Activated CD8-positive, alpha-beta T cell treated with anti-CD3 and anti-CD28 coated beads for 36 hours (primary cell): ENCODE measurements at regions of chr19 and their contacts with region 1.

Region 1: DNA sequence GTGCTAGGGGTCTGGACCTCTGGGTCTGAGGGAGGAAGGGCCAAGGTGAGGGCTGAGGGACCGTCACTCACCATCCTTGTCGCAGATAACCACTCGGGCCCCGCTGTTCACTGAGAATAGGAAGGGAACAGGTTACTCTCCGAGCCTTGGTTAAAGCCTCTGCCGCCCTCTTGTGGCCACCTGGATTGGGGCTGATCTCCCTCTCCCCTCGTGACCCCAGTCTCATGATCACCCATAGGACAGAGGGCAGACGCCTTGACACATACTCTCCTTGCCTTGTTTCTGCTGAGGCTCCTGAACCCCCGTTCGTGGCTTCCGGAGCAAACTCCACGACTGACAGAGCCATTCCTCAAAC is 580 bp downstream of the HSD17B14 start:
- DNase-seq: peak; percentile 100
- ATAC-seq: peak; percentile 88
- H3K4me3 Mint-ChIP-seq: peak overlapping the region; percentile 78
- H3K27ac Mint-ChIP-seq: peak overlapping the region; percentile 86
- H3K4me1 Mint-ChIP-seq: peaks cover 14% of the 10 kb centered on the region
- H3K27me3 Mint-ChIP-seq: peaks cover 5% of the 10 kb centered on the region
- CTCF ChIP-seq: peak; percentile 70

Region 2: DNA sequence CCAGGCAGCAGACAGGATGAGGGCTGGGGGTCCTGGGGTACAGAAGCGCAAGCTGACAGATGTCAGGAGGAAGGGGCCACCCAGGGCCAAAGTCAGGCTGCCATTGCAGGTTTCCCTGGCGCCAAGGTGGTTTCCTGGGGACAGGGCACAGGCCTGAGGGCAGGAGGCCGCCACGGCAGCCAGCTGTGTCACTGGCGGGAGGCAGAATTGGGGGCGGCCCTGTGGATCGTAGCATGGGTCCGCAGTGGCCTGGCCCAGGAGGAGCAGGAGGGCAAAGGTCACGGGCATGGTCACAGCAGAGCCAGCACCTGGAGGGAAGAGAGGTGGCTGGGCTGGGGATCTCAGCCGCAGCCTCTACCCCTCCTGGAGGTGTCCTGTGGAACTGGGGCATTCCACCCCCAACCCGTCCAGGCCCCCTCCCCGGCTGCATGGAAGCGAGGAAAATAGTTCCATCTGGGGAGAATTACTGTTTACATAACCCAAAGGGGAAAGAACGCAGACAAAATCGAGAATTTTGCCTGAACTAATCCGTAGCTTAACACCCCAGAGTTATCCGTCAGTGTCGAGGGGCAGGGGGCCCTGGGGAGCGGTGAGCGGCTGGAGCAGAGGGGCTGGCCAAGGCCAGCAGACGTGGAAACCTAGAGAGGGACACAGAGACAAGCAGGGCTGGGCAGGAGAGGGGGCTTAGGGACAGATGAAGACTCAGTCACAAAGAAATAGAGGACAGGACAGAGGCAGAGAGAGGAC is 164.8 kb before region 1 on chr19:
- CTCF ChIA-PET with region 1: no interaction called
- POLR2A ChIA-PET with region 1: no interaction called
- intact Hi-C with region 1: no loop called
- DNase-seq: no peak
- ATAC-seq: no peak
- H3K4me3 Mint-ChIP-seq: no peak overlapping the region
- H3K27ac Mint-ChIP-seq: no peak overlapping the region
- H3K4me1 Mint-ChIP-seq: peaks cover 3% of the 10 kb centered on the region
- H3K27me3 Mint-ChIP-seq: no peaks in the 10 kb centered on the region
- CTCF ChIP-seq: no peak

Region 3: DNA sequence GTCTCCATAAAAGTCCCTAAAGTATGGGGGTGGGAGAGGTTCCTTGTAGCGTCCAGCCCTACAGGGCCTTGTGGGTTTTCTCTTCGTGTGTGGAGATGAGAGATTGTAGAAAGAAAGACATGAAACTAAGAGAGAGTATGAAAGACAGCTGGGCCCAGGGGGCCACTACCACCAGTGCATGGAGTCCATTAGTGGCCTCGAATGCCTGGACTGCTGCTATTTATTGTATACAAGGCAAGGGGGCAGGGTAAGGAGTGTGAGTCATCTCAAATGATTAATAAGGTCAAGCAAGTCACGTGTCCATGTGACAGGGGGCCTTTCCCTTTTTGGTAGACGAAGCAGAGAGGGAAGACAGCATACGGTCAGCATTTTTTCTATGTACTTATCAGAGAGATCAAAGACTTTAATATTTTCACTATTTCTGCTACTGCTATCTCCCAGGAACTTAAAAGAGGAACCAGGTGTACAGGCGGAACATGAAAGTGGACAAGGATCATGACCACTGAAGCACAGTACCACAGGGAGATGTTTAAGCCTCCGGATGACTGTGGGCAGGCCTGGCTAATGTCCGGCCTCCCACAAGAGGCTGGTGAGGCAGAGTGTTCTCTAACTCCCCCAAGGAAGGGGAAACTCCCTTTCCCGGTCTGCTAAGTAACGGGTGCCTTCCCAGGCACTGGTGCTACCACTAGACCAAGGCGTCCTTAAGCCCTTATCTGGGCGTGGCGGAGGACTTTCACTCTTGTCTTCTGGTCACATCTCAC is 54.9 kb before region 1 on chr19:
- CTCF ChIA-PET with region 1: interaction called, 12 read pairs
- POLR2A ChIA-PET with region 1: interaction called, 5 read pairs
- intact Hi-C with region 1: no loop called
- DNase-seq: no peak
- ATAC-seq: no peak
- H3K4me3 Mint-ChIP-seq: no peak overlapping the region
- H3K27ac Mint-ChIP-seq: no peak overlapping the region
- H3K4me1 Mint-ChIP-seq: peaks cover 3% of the 10 kb centered on the region
- H3K27me3 Mint-ChIP-seq: peaks cover 3% of the 10 kb centered on the region
- CTCF ChIP-seq: no peak

Region 4: DNA sequence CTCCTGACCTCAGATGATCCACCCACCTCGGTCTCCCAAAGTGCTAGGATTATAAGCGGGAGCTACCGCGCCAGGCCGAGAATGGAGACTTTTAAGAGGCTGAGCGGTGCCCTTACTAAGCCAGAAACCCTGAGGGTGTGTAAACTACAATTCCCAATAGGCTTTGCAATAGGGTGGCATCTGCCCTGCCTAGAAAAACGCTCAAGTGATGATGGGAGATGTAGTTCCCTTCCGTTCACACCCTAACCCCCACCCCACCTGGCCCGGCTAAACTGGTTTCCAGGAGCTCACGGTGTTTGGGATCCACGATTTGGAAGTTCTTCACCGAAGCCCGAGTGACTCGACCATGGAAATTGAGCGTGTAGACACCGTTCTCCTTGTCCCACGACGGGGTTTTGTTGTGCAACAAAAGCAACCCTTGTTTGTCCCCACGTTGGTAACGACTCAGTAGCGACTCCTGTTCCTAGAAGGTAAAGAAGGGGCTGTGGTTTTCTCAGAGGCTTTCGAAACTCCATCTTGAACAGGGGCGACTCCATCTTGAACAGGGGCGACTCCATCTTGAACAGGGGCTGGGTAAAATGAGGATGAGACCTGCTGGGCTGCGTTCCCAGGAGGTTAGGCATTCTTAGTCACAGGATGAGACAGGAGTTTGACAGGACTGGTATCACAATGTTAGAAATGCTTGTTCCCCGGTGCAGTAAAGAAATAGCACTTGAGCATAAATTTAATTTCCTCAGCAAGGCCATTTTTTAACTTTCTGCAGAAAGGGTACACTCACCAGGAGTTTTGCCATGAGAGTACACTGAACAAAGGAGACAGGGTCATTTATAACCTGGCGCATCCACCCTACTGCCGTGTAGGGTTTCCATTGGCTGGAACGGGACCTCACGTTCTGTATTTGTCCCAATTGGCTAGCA is 46.3 kb after region 1 on chr19:
- CTCF ChIA-PET with region 1: no interaction called
- POLR2A ChIA-PET with region 1: no interaction called
- intact Hi-C with region 1: no loop called
- DNase-seq: peak; percentile 26
- ATAC-seq: peak; percentile 83
- H3K4me3 Mint-ChIP-seq: no peak overlapping the region
- H3K27ac Mint-ChIP-seq: no peak overlapping the region
- H3K4me1 Mint-ChIP-seq: peaks cover 11% of the 10 kb centered on the region
- H3K27me3 Mint-ChIP-seq: no peaks in the 10 kb centered on the region
- CTCF ChIP-seq: no peak